Aorta (tissue), 5 donors: ENCODE measurements at regions of chr2 and their contacts with region 1.

Region 1: GRCh38 chr2:71505086-71505769 is 51.9 kb downstream of the DYSF start:
- DNase-seq: no peak
- ATAC-seq: no peak
- H3K4me3 ChIP-seq: no peak overlapping the region
- H3K27ac ChIP-seq: no peak overlapping the region
- H3K4me1 ChIP-seq: no peaks in the 10 kb centered on the region
- H3K27me3 ChIP-seq: no peaks in the 10 kb centered on the region

Region 2: GRCh38 chr2:71157124-71157793 is 348.0 kb before region 1 on chr2:
- intact Hi-C with region 1: loop called in 1 of 2 experiments (anchors 10 kb)
- DNase-seq: no peak
- ATAC-seq: no peak
- H3K4me3 ChIP-seq: no peak overlapping the region
- H3K27ac ChIP-seq: no peak overlapping the region
- H3K4me1 ChIP-seq: no peaks in the 10 kb centered on the region
- H3K27me3 ChIP-seq: no peaks in the 10 kb centered on the region

Region 3: GRCh38 chr2:71423817-71424420 is 81.3 kb before region 1 on chr2:
- intact Hi-C with region 1: no loop called
- DNase-seq: no peak
- ATAC-seq: no peak
- H3K4me3 ChIP-seq: no peak overlapping the region
- H3K27ac ChIP-seq: no peak overlapping the region
- H3K4me1 ChIP-seq: no peaks in the 10 kb centered on the region
- H3K27me3 ChIP-seq: no peaks in the 10 kb centered on the region

Region 4: DNA sequence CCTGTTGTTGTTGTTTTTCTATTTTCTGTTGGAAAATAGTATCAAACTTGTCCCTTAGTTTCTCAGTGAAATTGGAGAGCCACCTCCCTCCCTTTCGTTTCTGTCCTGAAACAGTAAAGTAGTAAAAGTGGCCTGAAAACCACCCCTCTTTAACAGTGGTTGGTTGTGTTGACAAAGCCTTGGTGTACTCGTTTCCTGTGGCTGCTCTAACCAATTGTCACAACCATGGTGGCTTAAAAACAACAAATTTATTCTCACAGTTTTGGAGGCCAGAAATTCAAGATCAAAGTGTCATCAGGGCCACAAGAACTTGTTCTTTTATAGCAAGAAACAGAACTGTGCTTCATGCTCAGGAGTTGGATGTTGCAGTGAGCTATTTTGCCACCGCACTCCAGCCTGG is 55.9 kb before region 1 on chr2:
- intact Hi-C with region 1: no loop called
- DNase-seq: no peak
- ATAC-seq: no peak
- H3K4me3 ChIP-seq: no peak overlapping the region
- H3K27ac ChIP-seq: no peak overlapping the region
- H3K4me1 ChIP-seq: no peaks in the 10 kb centered on the region
- H3K27me3 ChIP-seq: no peaks in the 10 kb centered on the region

Region 5: DNA sequence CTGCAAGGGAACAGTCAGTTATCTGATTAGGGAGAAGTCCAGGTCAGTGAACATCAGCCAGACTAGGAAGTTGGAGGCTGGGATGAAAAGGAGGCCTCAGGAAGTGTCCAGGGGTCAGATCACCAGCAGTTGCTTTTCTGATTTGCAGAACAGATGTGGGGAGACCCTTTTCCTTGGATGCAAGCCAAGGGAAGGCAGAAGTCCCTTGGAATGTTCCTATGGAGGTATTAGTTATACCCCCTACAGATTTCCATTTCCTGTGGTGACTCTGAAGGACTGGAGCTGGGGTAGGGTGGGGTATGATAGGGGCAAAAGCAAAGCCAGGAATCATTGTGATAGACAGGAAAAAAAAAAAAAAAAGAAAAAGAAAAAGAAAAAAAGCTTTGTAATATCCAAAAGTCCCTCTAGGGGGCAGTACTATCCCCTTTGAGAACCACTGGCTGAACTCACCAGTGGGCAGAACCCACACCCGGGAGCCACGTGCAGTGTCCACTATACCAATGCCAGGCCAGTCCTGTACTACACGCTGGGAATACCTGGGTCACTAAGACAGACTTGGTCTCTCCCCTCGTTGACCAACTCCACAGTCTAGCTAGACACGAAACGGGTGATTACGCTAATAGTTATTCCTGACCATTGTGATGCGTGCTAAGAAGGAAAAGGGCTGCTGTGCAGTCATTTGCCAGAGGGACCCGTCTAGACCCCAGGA is 44.5 kb before region 1 on chr2:
- intact Hi-C with region 1: loop called in 1 of 2 experiments (anchors 5 kb)
- DNase-seq: no peak
- ATAC-seq: peak; percentile 44
- H3K4me3 ChIP-seq: no peak overlapping the region
- H3K27ac ChIP-seq: no peak overlapping the region
- H3K4me1 ChIP-seq: no peaks in the 10 kb centered on the region
- H3K27me3 ChIP-seq: no peaks in the 10 kb centered on the region

Region 6: GRCh38 chr2:71861186-71862160 is 356.2 kb after region 1 on chr2:
- intact Hi-C with region 1: no loop called
- DNase-seq: no peak
- ATAC-seq: no peak
- H3K4me3 ChIP-seq: no peak overlapping the region
- H3K27ac ChIP-seq: no peak overlapping the region
- H3K4me1 ChIP-seq: no peaks in the 10 kb centered on the region
- H3K27me3 ChIP-seq: no peaks in the 10 kb centered on the region